ENCODE measurements at regions of chr15 and their contacts with region 1.

Region 1: GRCh38 chr15:73972984-73973682 is 19.0 kb downstream of the STOML1 start:
- DNase-seq: peak; percentile 86
- CTCF ChIP-seq: peak; percentile 90

Region 2: DNA sequence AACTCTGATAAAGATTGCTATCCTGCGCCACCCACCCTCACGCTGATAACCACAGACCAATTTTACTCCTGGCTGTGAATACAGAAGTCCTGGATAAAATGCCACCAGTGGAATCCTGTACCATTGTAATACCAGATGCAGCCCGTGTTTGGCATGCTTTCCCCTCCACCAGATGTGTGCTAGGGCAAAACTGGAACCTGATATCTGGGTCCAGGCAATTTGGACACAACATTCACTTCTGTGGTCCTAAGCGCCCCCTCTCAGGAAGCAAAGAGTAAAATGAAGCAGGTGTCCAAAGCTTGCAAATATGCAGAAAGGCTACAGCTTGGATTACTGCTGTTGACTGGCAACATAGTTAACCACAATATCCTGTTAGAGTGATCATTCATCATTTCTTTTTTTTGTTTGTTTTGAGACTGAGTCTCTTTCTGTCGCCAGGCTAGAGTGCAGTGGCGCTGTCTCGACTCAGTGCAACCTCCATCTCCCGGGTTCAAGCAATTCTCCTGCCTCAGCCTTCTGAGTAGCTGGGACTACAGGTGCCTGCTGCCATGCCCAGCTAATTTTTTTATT is 14.0 kb before region 1 on chr15:
- CTCF ChIA-PET with region 1: interaction called, 34 read pairs
- POLR2A ChIA-PET with region 1: no interaction called
- DNase-seq: no peak
- CTCF ChIP-seq: no peak

Region 3: GRCh38 chr15:74011610-74012009 is 38.5 kb after region 1 on chr15:
- CTCF ChIA-PET with region 1: interaction called, 13 read pairs
- POLR2A ChIA-PET with region 1: no interaction called
- DNase-seq: no peak
- CTCF ChIP-seq: no peak

Region 4: GRCh38 chr15:74044267-74045110 is 71.4 kb after region 1 on chr15:
- CTCF ChIA-PET with region 1: interaction called, 22 read pairs
- POLR2A ChIA-PET with region 1: no interaction called
- DNase-seq: no peak
- CTCF ChIP-seq: no peak

Region 5: DNA sequence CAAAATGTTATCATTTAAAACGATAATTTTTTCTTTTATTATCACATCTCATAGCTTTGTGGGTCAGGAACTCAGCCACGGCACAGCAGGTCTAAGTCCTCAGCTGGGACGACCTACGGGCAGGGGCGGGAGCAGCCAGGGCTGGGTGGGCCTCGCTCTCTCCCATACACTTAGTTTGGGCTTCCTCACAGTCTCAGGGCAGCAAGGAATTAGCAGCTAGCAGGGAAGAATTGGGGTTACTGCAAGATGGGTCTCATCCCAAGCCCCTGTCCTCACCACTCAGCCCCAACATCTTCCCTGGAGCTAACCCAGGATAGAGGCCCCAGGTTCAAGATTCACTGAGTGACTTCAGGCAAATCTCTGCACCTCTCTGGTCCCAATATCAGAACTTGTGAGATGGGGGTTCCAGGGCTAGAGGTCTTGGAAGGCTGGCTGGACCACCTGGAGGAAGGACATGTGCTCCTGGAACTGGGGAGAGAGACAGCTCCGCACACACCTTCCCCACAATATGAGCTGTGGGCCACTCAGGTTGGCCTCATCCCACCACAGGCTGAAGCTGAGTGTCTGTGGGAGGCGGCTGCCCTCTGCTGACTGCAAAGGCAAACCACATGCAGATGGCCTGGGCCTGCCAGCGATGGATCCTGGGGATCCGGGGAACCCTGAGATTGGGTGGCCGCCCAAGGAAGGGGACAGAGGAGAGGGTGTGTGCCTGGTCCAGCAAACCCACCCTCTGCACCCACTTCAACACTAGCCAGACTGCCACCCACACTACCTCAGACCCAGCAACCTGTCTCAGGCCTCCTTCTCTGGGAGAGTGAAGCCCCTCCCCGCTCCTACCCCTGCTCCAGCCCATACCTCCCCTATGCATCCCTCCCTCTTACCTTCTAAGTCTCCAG is 349.3 kb after region 1 on chr15:
- CTCF ChIA-PET with region 1: interaction called, 14 read pairs
- POLR2A ChIA-PET with region 1: no interaction called
- DNase-seq: peak; percentile 86
- CTCF ChIP-seq: peak; percentile 98

Measured in GM10248 (cell line).